ENCODE measurements at regions of chr3 and their contacts with region 1.

Region 1: DNA sequence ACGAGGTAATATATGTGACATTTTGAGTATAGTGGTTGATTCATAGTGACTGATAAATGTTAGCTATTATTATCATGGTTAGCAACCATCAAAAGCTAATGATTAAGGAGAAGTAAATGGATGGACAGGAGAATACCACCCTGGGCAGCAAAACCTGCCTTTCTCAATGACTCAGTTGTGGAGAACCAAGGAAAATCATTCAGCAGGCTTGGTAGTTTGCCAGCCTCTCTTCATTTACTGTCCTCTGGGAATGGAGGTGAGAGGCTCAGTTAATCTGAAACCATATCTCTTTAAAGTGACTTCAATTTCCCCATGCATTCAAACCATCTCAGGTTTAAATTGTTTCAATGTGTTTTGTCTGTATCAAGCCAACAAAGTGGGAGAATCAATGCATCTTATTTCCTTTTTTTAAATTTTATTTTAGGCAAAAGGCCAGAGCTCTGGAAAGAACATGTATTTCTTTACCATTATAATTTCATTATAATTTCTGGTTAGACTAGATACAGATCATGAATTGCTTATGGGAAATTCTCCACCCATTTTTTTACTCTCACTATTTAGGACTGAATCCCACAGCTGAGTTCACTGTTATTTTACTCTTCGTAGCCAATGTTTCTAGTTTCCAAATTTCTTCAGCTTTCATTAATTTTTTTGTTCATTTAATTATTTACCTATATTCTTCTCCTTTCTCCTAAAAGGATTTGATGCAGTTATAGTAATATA is 2.7 kb downstream of the TM4SF18 start:
- DNase-seq: no peak
- ATAC-seq: no peak
- H3K4me3 ChIP-seq: no peak overlapping the region
- H3K27ac ChIP-seq: peak overlapping the region; percentile 100
- H3K4me1 ChIP-seq: peaks cover 45% of the 10 kb centered on the region
- H3K27me3 ChIP-seq: no peaks in the 10 kb centered on the region
- CTCF ChIP-seq: no peak

Region 2: GRCh38 chr3:149120051-149120972 is 210.5 kb before region 1 on chr3:
- CTCF ChIA-PET with region 1: no interaction called
- POLR2A ChIA-PET with region 1: no interaction called
- in situ Hi-C with region 1: no loop called
- intact Hi-C with region 1: loop called (anchors 5 kb)
- DNase-seq: peak; percentile 76
- ATAC-seq: peak; percentile 87
- H3K4me3 ChIP-seq: no peak overlapping the region
- H3K27ac ChIP-seq: peak overlapping the region; percentile 79
- H3K4me1 ChIP-seq: peaks cover 4% of the 10 kb centered on the region
- H3K27me3 ChIP-seq: no peaks in the 10 kb centered on the region
- CTCF ChIP-seq: peak; percentile 75

Region 3: GRCh38 chr3:149299938-149300791 is 30.6 kb before region 1 on chr3:
- CTCF ChIA-PET with region 1: interaction called, 3 read pairs
- POLR2A ChIA-PET with region 1: interaction called, 3 read pairs
- in situ Hi-C with region 1: no loop called
- intact Hi-C with region 1: loop called (anchors 1 kb)
- DNase-seq: peak; percentile 96
- ATAC-seq: peak; percentile 96
- H3K4me3 ChIP-seq: peak overlapping the region in 1 of 2 experiments; percentile 28; a peak in 2 of 4 replicates
- H3K27ac ChIP-seq: peak overlapping the region; percentile 99
- H3K4me1 ChIP-seq: peaks cover 41% of the 10 kb centered on the region
- H3K27me3 ChIP-seq: no peaks in the 10 kb centered on the region
- CTCF ChIP-seq: 0 out of 2 replicates have a peak, but pooled peaks have one; percentile 5